ENCODE measurements at regions of chr3 and their contacts with region 1.

Region 1: DNA sequence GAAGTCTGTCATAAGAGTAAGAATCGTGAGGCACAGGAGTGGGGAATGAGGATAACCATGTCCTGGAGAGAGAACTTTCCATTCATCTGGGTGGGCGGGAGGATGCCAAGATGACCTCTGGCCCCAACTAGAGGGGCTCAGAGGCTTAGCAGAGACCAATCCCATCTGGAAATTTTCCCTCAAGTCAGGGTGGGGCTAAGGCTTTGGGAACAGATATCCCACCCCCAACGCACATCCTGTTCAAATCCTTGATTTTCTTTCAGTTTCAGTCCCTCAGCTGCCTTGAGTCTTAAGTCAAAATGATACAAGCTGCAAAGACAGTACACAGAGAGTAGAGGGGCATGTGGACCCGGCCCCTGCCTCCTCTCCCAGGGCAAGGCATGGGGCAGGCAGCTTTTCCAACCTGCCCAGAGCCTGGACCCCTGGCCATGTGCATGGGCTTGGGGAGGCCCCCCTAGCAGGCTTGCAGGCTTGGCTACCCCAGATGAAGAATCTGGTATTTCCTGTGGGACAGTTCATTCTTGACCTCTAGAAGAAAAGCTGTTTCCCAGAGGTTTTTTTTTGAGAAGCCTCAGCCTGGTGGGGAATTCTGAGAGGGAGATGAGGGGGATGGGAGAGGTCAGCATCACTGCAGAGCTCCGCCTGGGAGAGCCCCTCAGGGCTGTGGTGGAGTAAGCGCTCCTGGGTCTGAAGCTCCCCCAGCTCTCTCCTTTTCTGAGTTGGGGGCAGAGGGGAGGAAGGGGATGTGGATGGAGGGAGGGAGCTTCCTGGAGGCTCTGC is 109.7 kb upstream of the HACD2 start:
- DNase-seq: no peak
- H3K4me3 ChIP-seq: peak overlapping the region in 1 of 2 donors; percentile 22
- H3K27ac ChIP-seq: peak overlapping the region; percentile 68
- H3K4me1 ChIP-seq: peaks cover 44% of the 10 kb centered on the region
- H3K27me3 ChIP-seq: no peaks in the 10 kb centered on the region
- CTCF ChIP-seq: no peak
- POLR2A ChIP-seq: no peak

Region 2: GRCh38 chr3:122101646-122102045 is 1592.9 kb before region 1 on chr3:
- intact Hi-C with region 1: no loop called
- DNase-seq: no peak
- H3K4me3 ChIP-seq: no peak overlapping the region
- H3K27ac ChIP-seq: no peak overlapping the region
- H3K4me1 ChIP-seq: no peaks in the 10 kb centered on the region
- H3K27me3 ChIP-seq: no peaks in the 10 kb centered on the region
- CTCF ChIP-seq: no peak
- POLR2A ChIP-seq: no peak

Region 3: DNA sequence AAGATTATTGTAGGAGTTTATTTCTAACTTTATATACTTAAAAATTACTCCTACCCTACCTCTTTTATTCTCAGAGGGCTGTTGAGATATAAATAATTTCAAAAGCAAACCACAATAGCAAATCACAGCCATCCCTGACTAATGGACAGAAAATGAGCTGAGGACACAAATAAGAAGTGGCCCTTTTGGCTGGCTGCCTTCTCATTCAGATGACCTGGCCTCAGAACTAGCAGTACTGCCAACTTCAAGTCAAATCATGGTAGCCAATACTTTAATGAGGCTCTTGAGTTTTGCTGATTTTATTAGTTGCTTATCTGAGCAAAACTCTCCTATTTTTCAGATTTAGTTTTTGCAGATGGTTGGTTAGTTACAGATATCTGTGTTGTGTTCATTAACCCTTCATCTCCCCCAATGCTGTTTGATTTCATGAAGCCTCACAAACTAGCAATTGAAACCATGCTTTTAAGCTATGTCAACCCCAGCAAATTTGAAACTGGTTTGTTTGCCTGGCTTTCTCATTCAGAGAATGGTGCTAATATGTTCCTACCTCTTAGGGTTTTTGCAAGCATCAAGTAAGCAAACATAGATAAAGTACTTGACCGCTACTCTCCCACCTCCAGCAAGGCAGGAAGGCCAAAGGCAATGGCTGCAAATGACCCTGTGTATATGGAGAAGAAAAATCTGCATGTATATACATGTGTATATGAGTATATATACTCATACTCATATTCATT is 36.3 kb before region 1 on chr3:
- intact Hi-C with region 1: loop called (anchors 5 kb)
- DNase-seq: no peak
- H3K4me3 ChIP-seq: no peak overlapping the region
- H3K27ac ChIP-seq: peak overlapping the region; percentile 86
- H3K4me1 ChIP-seq: peaks cover 95% of the 10 kb centered on the region
- H3K27me3 ChIP-seq: no peaks in the 10 kb centered on the region
- CTCF ChIP-seq: no peak
- POLR2A ChIP-seq: no peak

Measured in vagina (tissue), 2 donors.